ENCODE measurements at regions of chrX and their contacts with region 1.

Region 1: DNA sequence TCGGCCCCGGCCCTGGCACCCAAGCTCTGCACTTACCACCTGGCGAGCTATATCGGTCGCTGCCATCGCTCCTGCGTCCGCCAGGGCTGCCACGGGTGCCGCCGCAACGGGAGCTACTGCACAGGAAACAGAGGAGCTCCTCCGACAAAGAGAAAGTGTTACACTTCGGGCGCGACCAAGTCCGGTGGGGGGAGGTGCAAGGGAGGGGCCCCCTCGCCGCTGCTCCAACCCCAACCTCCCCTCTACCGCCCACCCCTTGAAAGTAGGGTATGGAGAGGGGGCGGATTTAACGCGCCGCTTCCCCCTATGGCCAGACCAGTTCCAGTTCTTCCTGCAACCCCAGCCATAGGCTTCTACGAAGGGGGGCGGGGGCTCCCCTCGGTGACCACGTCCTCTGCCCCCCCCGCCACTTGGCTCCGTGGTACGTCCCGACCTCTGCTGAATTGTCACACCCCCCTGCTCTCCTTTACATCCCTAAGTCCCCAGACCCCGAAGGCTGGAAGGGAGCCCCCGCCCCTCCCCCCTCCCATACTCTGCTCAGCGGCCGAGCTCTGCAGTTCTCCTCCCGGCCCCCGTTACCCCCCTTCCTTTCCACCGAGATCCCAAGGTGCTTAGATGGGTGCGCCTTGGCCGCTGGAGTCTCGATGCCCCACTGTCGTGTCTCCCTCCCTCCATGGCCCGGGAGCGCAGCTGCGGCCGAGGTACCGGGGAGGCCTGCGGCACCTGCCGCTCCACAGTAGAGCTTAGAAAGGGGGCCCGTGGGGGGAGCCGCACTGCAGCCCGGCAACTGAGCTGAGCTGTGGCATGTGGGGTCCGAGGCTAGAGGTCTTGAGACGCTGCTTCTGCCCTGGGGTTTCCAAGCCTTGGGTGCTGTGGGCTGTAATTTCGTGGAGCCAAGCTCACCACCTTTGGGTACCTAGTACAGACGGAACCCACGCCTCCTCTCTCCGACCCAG is at the start of gene SEPTIN6:
- DNase-seq: peak; percentile 89
- H3K4me3 Mint-ChIP-seq: peak within 1 kb of the TSS; percentile 88
- H3K27ac Mint-ChIP-seq: peak within 1 kb of the TSS; percentile 99
- H3K4me1 Mint-ChIP-seq: peaks cover 6% of the 10 kb centered on the region
- H3K27me3 Mint-ChIP-seq: no peaks in the 10 kb centered on the region
- total RNA-seq, gene SEPTIN6: 154 to 156 TPM

Region 2: DNA sequence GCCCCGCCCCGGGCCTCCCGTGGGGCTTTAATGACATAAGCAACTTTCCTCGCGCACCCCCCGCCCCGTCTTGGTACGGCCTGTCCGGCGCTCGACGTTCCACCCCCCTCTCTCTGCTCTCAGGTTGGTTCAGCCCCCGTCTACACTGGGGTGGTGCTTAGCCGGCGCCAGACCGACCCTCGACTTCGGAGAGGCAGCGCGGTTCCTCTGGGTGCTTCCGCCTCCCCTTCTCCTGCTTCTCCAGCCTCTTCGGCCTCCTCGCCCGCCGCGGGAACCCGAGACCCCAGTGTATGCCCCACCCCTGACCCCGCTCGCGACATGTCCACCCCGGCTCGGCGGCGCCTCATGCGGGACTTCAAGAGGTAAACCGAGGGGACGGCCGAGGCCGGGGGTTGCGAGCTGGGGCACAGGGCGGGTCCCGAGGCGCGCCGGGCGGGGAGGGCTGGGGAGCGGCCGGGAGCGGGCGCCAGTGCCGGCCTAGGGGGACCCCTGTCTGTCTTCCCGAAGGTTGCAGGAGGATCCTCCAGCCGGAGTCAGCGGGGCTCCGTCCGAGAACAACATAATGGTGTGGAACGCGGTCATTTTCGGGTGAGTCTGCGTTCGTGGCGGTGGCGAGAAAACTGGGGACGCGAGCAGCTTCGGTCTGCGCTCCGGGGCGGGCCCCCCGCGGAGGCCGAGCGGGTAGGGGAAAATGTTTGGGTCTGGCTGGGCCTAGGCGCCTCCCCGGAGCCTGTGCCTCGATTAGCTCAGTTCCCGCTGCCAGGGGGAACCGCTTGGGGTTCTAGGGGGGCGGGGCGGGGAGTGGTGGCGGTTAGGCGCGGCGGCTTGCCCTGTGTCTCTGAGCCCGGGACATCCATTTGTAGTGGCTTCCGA is 118.7 kb before region 1 on chrX and contains the start of gene UBE2A:
- CTCF ChIA-PET with region 1: no interaction called
- POLR2A ChIA-PET with region 1: interaction called, 5 read pairs
- intact Hi-C with region 1: loop called (anchors 5 kb)
- DNase-seq: peak; percentile 92
- H3K4me3 Mint-ChIP-seq: peak within 1 kb of the TSS; percentile 81
- H3K27ac Mint-ChIP-seq: peak within 1 kb of the TSS; percentile 82
- H3K4me1 Mint-ChIP-seq: peaks cover 25% of the 10 kb centered on the region
- H3K27me3 Mint-ChIP-seq: no peaks in the 10 kb centered on the region
- total RNA-seq, gene UBE2A: 53.9 to 57.4 TPM

Region 3: DNA sequence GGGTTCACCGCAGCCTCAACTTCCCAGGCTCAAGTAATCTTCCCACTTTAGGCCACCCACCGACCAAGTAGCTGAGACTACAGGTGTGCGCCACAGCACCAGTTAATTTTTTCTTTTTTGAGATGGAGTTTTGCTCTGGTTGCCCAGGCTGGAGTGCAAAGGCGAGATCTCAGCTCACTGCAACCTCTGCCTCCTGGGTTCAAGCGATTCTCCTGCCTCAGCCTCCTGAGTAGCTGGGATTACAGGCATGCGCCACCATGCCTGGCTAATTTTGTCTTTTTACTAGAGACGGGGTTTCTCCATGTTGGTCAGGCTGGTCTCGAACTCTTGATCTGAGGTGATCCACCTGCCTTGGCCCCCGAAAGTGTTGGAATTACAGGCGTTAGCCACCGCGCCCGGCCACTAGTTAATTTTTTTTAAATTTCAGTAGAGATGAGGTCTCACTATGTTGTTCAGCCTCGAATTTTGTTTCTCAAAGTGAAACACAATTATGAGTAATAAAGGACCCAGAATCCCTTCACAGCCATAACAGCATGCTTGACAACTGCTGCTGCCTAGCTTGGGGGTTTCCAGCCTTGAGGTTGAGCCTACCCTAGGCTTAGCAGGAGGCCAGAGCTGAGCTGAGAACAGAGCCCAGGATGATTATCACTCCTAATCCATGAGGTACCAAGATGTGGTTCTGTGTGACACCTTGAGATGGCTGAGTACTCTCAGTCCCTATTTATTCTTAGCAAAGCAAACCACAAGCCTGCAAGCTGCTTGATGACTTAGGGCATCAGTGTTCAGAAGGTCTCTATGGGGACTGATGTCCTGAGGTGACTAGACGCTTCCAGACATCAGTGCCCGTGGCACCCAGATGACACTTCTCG is 45.5 kb before region 1 on chrX:
- CTCF ChIA-PET with region 1: interaction called, 5 read pairs
- POLR2A ChIA-PET with region 1: interaction called, 14 read pairs
- intact Hi-C with region 1: loop called (anchors 1 kb)
- DNase-seq: peak; percentile 84
- H3K4me3 Mint-ChIP-seq: peak overlapping the region; percentile 51
- H3K27ac Mint-ChIP-seq: peak overlapping the region; percentile 97
- H3K4me1 Mint-ChIP-seq: peaks cover 33% of the 10 kb centered on the region
- H3K27me3 Mint-ChIP-seq: no peaks in the 10 kb centered on the region

Region 4: GRCh38 chrX:119676949-119677653 is 16.2 kb before region 1 on chrX:
- CTCF ChIA-PET with region 1: interaction called, 12 read pairs
- POLR2A ChIA-PET with region 1: interaction called, 43 read pairs
- intact Hi-C with region 1: loop called (anchors 2 kb)
- DNase-seq: no peak
- H3K4me3 Mint-ChIP-seq: no peak overlapping the region
- H3K27ac Mint-ChIP-seq: peak overlapping the region; percentile 97
- H3K4me1 Mint-ChIP-seq: peaks cover 43% of the 10 kb centered on the region
- H3K27me3 Mint-ChIP-seq: no peaks in the 10 kb centered on the region

Region 5: DNA sequence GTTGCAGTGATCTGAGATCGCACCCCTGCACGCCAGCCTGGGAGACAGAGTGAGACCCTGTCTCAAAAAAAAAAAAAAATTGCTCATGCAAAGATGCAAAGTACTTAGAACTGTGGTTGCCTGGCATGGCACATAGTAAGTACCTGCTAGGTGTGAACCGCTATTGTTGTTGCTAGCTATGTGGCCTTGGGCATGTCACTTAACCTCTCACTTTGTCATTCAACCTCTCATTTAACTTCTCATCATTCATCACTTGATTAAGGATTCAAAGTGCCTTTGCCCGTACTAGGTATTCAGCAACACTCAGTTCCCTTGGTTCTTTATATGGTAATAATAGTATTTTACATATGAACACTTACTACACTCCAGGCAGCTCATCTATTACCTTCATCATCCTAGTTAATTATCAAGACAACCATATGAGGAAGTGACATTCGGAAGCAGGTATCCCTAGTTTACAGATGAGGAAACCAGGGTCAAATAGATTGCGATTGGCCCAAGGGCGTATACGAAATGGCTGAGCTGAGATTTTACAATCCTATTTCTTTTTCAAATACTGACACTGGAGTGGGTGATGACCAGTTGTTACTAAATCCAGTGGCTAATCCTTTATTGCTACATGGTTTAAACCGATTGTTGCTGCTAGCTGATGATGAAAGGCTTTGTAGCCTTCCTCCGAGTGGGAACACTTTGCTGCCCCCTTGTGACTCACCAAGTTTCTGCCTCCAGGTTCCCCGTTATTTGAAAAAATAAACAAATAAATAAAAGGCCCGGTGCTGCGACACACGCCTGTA is 36.3 kb after region 1 on chrX:
- CTCF ChIA-PET with region 1: interaction called, 12 read pairs
- POLR2A ChIA-PET with region 1: interaction called, 6 read pairs
- intact Hi-C with region 1: loop called (anchors 5 kb)
- DNase-seq: peak; percentile 68
- H3K4me3 Mint-ChIP-seq: no peak overlapping the region
- H3K27ac Mint-ChIP-seq: no peak overlapping the region
- H3K4me1 Mint-ChIP-seq: peaks cover 5% of the 10 kb centered on the region
- H3K27me3 Mint-ChIP-seq: no peaks in the 10 kb centered on the region

Region 6: GRCh38 chrX:119753571-119754257 is 60.4 kb after region 1 on chrX:
- CTCF ChIA-PET with region 1: interaction called, 6 read pairs
- POLR2A ChIA-PET with region 1: interaction called, 7 read pairs
- intact Hi-C with region 1: loop called (anchors 2 kb)
- DNase-seq: peak; percentile 54
- H3K4me3 Mint-ChIP-seq: peak overlapping the region; percentile 16
- H3K27ac Mint-ChIP-seq: peak overlapping the region; percentile 90
- H3K4me1 Mint-ChIP-seq: peaks cover 40% of the 10 kb centered on the region
- H3K27me3 Mint-ChIP-seq: no peaks in the 10 kb centered on the region

Measured in activated CD4-positive, alpha-beta memory T cell treated with anti-CD3 and anti-CD28 coated beads for 36 hours (primary cell).